ENCODE measurements at regions of chr2 and their contacts with region 1.

Region 1: DNA sequence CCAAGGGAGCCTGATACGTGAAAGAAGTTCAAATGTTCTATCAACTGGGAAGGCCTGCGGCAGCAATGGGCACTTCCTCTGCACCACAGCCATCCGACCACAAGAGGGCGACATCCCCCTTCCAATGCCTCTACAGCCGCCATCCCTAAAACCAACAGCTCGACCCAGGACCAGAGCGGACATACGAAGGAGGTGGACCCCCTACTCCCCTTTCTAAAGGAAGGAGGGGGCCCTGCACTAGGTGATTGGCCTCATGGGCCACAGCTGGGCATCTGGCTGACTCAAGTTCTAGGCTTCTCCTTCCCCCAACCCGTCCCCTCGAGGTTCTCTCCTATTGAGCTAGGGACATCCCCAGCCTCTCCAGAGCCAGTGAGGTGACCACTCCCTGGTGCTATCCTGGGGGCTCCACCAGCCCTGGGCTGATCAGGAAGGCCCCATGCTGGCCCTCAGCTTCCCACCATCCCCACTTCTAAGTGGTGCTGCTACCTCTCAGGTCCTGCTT is 217.2 kb downstream of the TNS1 start:
- DNase-seq: peak; percentile 79 to 82
- ATAC-seq: peak; percentile 66 to 80 (median 72)
- H3K4me3 ChIP-seq: no peak overlapping the region
- H3K27ac ChIP-seq: no peak overlapping the region
- H3K4me1 ChIP-seq: peaks cover 0 to 28% (median 22%) of the 10 kb centered on the region in 9 donors
- H3K27me3 ChIP-seq: no peaks in the 10 kb centered on the region
- CTCF ChIP-seq: peak; percentile 88 to 98 (median 97)

Region 2: DNA sequence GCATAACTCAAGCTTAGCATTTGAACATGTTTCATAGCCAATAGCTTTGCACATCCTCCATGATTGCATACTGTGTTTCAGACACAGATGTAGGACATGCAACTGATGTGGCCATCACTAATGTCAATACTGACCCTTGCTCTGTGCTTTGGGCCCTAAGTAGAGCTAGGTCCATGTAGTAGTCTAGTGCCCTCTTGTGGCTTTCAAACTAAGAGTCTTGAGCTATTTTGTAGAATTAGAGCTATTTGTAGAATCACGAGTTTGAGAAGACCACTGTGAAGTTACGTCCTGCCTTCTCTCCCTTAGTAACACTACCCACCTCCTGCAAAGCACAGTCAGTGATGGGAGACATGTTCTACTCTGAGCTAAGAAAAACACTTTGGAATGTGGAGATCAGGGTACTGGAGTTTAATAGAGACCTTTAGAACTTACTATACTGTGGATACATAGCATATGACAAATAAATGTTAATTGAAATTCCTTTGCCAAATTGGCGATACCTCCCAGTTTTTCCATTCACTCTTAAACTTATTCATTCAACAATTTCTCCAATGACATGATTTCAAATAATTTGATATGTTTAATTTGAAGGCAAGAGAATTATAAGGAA is 619.2 kb before region 1 on chr2:
- intact Hi-C with region 1: no loop called
- DNase-seq: peak in 1 of 2 donors; percentile 41
- ATAC-seq: peak; percentile 43 to 83 (median 69)
- H3K4me3 ChIP-seq: no peak overlapping the region
- H3K27ac ChIP-seq: no peak overlapping the region
- H3K4me1 ChIP-seq: peaks cover 0 to 23% (median 5%) of the 10 kb centered on the region in 9 donors
- H3K27me3 ChIP-seq: peaks cover 0 to 74% (median 0%) of the 10 kb centered on the region in 7 donors
- CTCF ChIP-seq: peak; percentile 42 to 78 (median 64)

Region 3: GRCh38 chr2:217614498-217614897 is 171.1 kb before region 1 on chr2:
- intact Hi-C with region 1: no loop called
- DNase-seq: no peak
- ATAC-seq: no peak
- H3K4me3 ChIP-seq: no peak overlapping the region
- H3K27ac ChIP-seq: no peak overlapping the region
- H3K4me1 ChIP-seq: peaks cover 0 to 20% (median 0%) of the 10 kb centered on the region in 9 donors
- H3K27me3 ChIP-seq: no peaks in the 10 kb centered on the region
- CTCF ChIP-seq: no peak

Region 4: DNA sequence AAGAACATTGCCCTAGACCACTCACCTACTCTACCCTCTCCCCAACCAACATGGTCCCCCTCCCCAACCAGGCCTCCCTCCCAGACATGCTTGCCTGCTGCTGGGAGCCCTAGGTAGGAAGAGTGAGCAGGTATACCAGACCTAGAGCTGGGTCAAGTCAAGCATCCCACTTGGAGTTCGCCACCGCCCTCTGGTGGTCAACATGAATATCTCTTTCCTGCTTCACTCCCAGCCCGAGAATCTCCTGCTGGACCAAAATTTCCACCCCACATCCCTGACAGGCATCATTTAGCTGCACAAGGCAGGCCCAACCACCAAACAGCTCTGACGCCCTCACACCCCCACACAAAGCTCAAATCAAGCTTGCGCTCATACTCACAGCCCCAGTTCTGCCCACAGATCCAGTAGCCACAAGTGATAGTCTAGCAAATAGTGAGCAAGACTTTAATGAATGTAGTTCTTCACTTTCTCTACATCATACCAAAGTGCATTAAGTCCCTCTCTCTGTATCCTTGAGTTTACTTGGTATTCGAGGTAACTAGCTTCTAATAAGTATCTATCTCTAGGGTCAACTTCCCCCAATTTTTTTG is 101.2 kb after region 1 on chr2:
- intact Hi-C with region 1: loop called (anchors 1 to 5 kb)
- DNase-seq: peak; percentile 72 to 82
- ATAC-seq: peak in 7 of 8 donors; percentile 18 to 67 (median 47)
- H3K4me3 ChIP-seq: no peak overlapping the region
- H3K27ac ChIP-seq: peak overlapping the region in 7 of 10 donors; percentile 4 to 83 (median 57)
- H3K4me1 ChIP-seq: peaks cover 25 to 69% (median 57%) of the 10 kb centered on the region in 9 donors
- H3K27me3 ChIP-seq: no peaks in the 10 kb centered on the region
- CTCF ChIP-seq: peak; percentile 73 to 89 (median 81)

Region 5: DNA sequence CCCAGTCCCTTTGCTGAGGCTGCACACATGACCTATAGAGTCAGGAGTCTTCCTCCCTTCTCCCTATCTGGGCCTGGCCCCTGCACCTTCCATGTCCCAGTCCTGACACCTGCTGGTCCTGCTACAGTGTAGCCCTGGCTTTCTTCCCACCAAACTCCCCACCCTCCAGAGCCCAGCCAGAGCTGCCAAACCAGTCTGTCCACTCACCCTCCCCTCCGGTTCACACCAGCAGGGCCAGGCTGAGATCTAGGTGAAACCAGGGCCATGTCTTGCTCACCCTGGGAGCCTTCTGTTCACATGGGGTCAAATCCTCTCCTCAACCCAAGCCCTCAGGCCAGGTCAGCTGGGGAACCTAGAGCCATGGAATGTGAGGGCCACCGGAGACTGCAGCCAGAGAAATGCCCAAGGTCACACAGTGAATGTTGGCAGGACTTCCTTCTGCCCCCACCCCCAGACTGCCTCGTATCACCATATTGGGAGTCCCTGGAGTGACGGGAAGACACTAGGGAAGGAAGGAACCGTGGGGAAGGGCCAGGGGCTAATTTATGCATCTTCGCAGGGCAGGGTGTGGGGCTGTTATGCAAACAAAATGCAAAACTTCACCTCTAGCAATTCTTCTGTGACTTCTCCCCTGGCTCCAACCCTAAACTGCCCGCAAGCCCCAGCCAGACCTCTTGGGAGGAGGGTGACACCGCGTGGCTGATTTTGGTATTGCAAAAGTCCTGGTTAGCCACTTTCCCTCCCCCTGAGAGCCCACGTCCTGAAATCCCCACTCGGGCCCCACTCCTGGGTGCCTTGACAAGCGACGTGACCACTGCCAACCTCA is 202.6 kb after region 1 on chr2:
- intact Hi-C with region 1: loop called (anchors 1 to 2 kb)
- DNase-seq: peak; percentile 84 to 91
- ATAC-seq: peak; percentile 78 to 91 (median 88)
- H3K4me3 ChIP-seq: peak overlapping the region in 2 of 10 donors; percentile 9 to 10
- H3K27ac ChIP-seq: peak overlapping the region; percentile 19 to 90 (median 75)
- H3K4me1 ChIP-seq: peaks cover 13 to 63% (median 38%) of the 10 kb centered on the region in 9 donors
- H3K27me3 ChIP-seq: no peaks in the 10 kb centered on the region
- CTCF ChIP-seq: peak; percentile 83 to 92 (median 90)

Region 6: DNA sequence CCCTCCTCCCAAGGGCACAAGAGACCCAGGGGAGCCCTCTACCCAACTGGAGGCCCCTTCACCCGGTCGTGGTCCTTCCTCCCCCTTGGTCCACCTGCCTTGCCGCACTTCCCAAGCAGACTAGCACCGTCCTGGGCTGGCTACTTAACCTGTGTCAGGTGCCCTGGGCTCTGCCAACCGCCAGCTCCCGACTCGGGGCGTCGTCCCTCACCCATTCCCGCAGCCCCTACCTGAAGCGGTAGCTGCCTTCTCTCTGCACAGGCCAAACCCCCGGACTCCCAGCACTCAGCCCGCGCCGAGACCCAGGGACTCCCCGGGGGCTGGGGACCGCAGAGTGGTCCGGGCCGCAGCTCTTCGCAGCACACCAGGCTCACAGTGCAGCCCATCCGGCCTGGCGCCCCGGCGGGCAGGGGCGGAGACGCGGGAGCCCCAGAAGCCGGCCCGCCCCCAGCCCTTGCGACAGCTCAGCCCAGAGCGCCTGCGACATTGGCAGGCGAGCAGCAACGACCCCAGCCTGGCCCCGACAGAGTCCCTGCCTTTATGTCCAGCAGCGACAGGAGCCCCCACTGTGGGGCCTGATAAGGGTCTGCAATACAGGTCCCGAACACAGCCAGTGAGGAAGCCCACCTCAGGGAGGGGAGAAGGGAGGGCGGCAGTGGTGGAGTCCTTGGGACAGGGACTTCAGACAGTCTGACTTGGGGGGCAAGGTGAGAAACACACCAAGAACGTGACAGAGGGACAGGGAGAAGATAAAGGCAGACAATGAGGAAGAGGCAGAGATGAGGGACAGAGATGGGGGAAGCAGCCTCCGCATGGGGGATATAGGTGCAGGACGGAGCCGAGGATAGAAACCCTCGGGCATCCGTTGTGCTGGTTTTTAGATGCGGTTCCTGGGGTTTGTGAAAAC is 248.2 kb after region 1 on chr2:
- intact Hi-C with region 1: loop called in 9 of 10 experiments (anchors 1 to 10 kb)
- DNase-seq: no peak
- ATAC-seq: peak in 2 of 8 donors; percentile 3 to 18
- H3K4me3 ChIP-seq: peak overlapping the region in 5 of 10 donors; percentile 14 to 45 (median 33)
- H3K27ac ChIP-seq: peak overlapping the region in 1 of 10 donors; percentile 76
- H3K4me1 ChIP-seq: peaks cover 7 to 30% (median 23%) of the 10 kb centered on the region in 9 donors
- H3K27me3 ChIP-seq: peaks cover 0 to 11% (median 0%) of the 10 kb centered on the region in 7 donors
- CTCF ChIP-seq: no peak

Region 7: DNA sequence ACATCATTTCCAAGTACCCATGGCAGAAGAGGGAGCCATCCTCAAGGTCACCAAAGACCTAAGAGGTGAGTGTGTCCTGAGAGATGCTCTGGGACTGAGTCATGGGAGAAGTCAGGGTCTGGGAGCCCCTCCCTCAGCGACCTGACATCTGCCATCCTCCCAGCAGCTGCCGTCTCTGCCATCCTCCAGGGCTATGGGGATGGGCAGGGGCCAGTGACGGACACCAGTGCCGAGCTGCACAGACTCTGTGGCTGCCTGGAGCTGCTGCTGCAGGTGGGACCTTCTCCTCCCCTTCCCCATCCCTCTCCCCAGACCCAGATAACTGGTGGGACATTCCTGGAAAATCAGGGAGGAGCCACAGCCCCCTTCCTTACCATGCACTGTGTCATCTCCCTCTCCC is 285.0 kb after region 1 on chr2:
- intact Hi-C with region 1: loop called (anchors 1 to 10 kb)
- DNase-seq: no peak
- ATAC-seq: no peak
- H3K4me3 ChIP-seq: no peak overlapping the region
- H3K27ac ChIP-seq: no peak overlapping the region
- H3K4me1 ChIP-seq: peaks cover 0 to 14% (median 4%) of the 10 kb centered on the region in 9 donors
- H3K27me3 ChIP-seq: peaks cover 0 to 20% (median 0%) of the 10 kb centered on the region in 7 donors
- CTCF ChIP-seq: no peak

Measured in heart right ventricle (tissue), 16 donors.